Esophagus squamous epithelium (tissue), 5 donors: ENCODE measurements at regions of chr17 and their contacts with region 1.

Region 1: GRCh38 chr17:32319548-32319905 is 22.4 kb downstream of the C17orf75 start:
- DNase-seq: peak; percentile 9
- H3K4me3 ChIP-seq: no peak overlapping the region
- H3K27ac ChIP-seq: no peak overlapping the region
- H3K4me1 ChIP-seq: peaks cover 0 to 10% (median 10%) of the 10 kb centered on the region in 3 donors
- H3K27me3 ChIP-seq: no peaks in the 10 kb centered on the region
- CTCF ChIP-seq: peak; percentile 81 to 96 (median 90)
- POLR2A ChIP-seq: no peak

Region 2: DNA sequence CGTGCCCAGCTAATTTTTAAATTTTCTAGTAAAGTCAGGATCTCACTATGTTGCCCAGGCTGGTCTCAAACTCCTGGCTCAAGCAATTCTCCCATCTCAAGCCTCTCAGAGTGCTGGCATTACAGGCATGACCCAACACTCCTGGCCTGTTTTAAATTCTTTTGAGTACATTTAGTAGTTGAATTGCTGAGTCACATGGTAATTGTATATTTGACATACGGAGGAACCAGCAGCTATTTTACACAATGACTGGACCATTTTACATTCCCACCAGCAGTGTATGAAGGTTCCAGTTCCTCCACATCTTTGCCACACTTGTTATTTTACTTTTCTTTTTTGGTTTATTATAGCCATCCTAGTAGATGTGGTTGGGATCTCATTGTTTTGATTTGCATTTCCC is 133.7 kb before region 1 on chr17:
- intact Hi-C with region 1: no loop called
- DNase-seq: no peak
- H3K4me3 ChIP-seq: no peak overlapping the region
- H3K27ac ChIP-seq: no peak overlapping the region
- H3K4me1 ChIP-seq: no peaks in the 10 kb centered on the region
- H3K27me3 ChIP-seq: no peaks in the 10 kb centered on the region
- CTCF ChIP-seq: no peak
- POLR2A ChIP-seq: no peak

Region 3: GRCh38 chr17:32264140-32264799 is 55.3 kb before region 1 on chr17:
- intact Hi-C with region 1: loop called (anchors 5 kb)
- DNase-seq: no peak
- H3K4me3 ChIP-seq: peak overlapping the region in 1 of 4 donors; percentile 66
- H3K27ac ChIP-seq: peak overlapping the region in 2 of 4 donors; percentile 35 to 68
- H3K4me1 ChIP-seq: peaks cover 14 to 37% (median 22%) of the 10 kb centered on the region in 3 donors
- H3K27me3 ChIP-seq: peaks cover 6 to 73% (median 9%) of the 10 kb centered on the region in 4 donors
- CTCF ChIP-seq: peak in 1 of 6 experiments; percentile 15
- POLR2A ChIP-seq: no peak